Heart right ventricle (tissue), 16 donors: ENCODE measurements at regions of chr2 and their contacts with region 1.

Region 1: DNA sequence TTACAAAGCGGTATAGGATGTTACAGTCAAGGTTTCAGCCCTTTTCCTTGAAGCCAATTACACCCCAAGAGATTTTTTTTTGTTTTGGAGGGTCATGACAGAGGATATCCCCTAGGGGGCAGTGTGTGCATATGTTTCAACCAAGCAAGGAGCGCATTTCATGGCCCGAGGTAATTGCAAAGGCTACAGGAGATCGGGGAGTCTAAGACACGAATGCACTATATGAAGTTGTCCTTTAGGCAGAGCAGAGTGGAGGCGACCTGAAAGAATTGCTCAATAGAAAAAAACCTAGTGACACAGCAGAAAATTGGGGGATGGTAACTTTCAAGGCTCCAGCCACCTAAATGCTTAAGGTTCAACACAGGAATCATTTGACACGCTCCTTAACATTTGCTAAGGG is 219.8 kb upstream of the PARD3B start:
- DNase-seq: peak in 1 of 2 donors; percentile 76
- ATAC-seq: peak in 6 of 8 donors; percentile 35 to 64 (median 56)
- H3K4me3 ChIP-seq: no peak overlapping the region
- H3K27ac ChIP-seq: no peak overlapping the region
- H3K4me1 ChIP-seq: peaks cover 0 to 35% (median 5%) of the 10 kb centered on the region in 9 donors
- H3K27me3 ChIP-seq: peaks cover 0 to 6% (median 0%) of the 10 kb centered on the region in 7 donors
- CTCF ChIP-seq: peak; percentile 81 to 92 (median 89)

Region 2: GRCh38 chr2:204145263-204145751 is 180.2 kb before region 1 on chr2:
- intact Hi-C with region 1: loop called in 1 of 10 experiments (anchors 10 kb)
- DNase-seq: peak; percentile 74 to 79
- ATAC-seq: peak; percentile 87 to 98 (median 96)
- H3K4me3 ChIP-seq: peak overlapping the region; percentile 14 to 59 (median 44)
- H3K27ac ChIP-seq: peak overlapping the region in 6 of 10 donors; percentile 28 to 66 (median 53)
- H3K4me1 ChIP-seq: peaks cover 0 to 11% (median 6%) of the 10 kb centered on the region in 9 donors
- H3K27me3 ChIP-seq: peaks cover 0 to 5% (median 0%) of the 10 kb centered on the region in 7 donors
- CTCF ChIP-seq: peak in 8 of 9 donors; percentile 89 to 98 (median 96)

Region 3: GRCh38 chr2:204370172-204370743 is 44.8 kb after region 1 on chr2:
- intact Hi-C with region 1: no loop called
- DNase-seq: no peak
- ATAC-seq: no peak
- H3K4me3 ChIP-seq: no peak overlapping the region
- H3K27ac ChIP-seq: no peak overlapping the region
- H3K4me1 ChIP-seq: no peaks in the 10 kb centered on the region
- H3K27me3 ChIP-seq: peaks cover 0 to 4% (median 0%) of the 10 kb centered on the region in 7 donors
- CTCF ChIP-seq: no peak

Region 4: DNA sequence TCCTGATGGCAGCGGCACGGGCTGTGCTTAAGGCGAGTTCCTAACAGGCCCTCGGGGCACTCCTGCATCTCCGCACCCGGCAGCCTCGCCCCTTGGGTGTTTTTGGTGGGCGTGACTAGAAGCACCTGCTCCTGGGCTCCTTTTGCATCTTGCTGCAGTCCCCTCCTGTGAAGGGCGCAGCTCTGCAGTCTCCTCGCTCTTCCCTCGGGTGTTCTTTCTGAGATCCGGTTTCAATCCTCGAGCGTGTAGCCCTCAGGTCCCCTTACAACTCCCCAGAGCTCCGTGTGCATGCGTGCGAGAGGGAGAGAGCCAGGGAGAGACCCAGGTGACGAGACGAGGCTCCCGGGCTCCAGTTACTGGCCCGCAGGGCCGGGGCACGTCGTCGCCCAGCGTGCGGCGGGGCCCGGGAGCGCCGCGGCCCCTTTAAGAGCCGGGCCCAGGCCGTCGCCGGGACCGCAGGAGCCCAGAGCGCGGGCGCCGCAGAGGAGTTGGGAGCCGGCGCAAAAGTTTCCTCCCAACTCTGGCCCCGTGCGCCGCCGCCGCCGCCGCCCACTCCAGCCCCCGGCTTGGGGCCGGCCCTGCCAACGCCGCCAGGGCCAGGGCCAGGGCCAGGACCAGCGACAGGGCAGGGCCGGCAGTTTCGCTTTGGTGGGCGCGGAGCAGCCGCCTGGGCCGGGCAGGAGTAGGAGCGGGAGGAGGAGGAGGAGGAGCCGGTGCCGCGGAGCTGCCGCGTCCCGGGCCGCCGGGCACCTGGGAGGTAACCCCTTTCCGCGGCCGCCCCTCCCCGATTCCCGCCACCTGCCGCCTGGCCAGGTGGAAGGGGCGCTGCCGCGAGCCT is 219.8 kb after region 1 on chr2 and contains the start of gene PARD3B:
- intact Hi-C with region 1: loop called in 1 of 10 experiments (anchors 5 kb)
- DNase-seq: peak; percentile 37 to 65
- ATAC-seq: peak; percentile 93 to 99 (median 96)
- H3K4me3 ChIP-seq: peak within 1 kb of the TSS; percentile 84 to 98 (median 94)
- H3K27ac ChIP-seq: peak within 1 kb of the TSS; percentile 54 to 85 (median 76)
- H3K4me1 ChIP-seq: peaks cover 0 to 29% (median 21%) of the 10 kb centered on the region in 9 donors
- H3K27me3 ChIP-seq: peaks cover 0 to 28% (median 0%) of the 10 kb centered on the region in 7 donors
- CTCF ChIP-seq: no peak
- total RNA-seq, gene PARD3B: 6.7 to 12.4 (median 8.9) TPM

Region 5: DNA sequence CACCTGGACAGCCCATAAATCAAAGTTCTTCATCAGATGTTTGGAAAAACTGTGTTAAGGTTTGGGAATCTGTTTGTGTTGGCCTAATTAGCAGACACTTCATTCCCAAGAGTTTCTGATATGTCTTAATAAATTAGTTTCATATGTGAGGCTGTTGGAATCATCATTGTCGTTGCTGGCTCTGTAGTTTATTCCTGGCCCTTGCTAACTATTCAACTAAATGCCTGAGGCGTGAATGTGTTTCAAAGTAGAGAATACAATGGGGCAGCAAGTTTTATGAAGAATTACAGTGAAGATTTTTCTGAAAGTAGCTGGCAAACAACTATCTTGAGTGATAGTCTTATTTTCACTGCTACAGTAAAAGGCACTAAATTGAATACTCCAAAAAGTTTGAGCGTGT is 360.9 kb after region 1 on chr2:
- intact Hi-C with region 1: loop called in 8 of 10 experiments (anchors 2 to 10 kb)
- DNase-seq: no peak
- ATAC-seq: no peak
- H3K4me3 ChIP-seq: no peak overlapping the region
- H3K27ac ChIP-seq: no peak overlapping the region
- H3K4me1 ChIP-seq: peaks cover 0 to 5% (median 0%) of the 10 kb centered on the region in 9 donors
- H3K27me3 ChIP-seq: no peaks in the 10 kb centered on the region
- CTCF ChIP-seq: no peak

Region 6: DNA sequence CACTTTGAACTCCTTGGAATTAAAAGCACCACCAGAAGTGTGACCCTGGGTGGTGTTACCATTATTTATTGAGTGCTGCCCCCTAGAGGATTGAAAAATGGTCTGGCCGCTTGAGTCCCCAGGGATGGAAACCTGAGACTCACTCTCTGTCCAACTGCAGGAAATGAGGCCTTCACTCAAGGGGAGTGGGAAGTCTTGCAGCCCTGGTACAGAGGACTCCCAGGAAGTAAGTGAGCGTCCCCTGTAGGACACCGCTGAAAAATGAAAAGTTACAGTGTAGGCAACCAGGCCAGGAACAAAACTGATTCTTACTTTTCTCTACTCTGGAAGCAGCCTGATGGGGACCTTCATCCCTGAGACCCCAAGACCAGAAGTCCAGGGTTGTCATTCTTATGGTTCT is 1354.6 kb after region 1 on chr2:
- intact Hi-C with region 1: loop called (anchors 2 to 10 kb)
- DNase-seq: peak in 1 of 2 donors; percentile 74
- ATAC-seq: peak in 7 of 8 donors; percentile 19 to 41 (median 21)
- H3K4me3 ChIP-seq: no peak overlapping the region
- H3K27ac ChIP-seq: no peak overlapping the region
- H3K4me1 ChIP-seq: peaks cover 4 to 40% (median 24%) of the 10 kb centered on the region in 9 donors
- H3K27me3 ChIP-seq: peaks cover 0 to 47% (median 19%) of the 10 kb centered on the region in 7 donors
- CTCF ChIP-seq: peak; percentile 42 to 79 (median 69)